MCF 10A (cell line): ENCODE measurements at regions of chr1 and their contacts with region 1.

Region 1: DNA sequence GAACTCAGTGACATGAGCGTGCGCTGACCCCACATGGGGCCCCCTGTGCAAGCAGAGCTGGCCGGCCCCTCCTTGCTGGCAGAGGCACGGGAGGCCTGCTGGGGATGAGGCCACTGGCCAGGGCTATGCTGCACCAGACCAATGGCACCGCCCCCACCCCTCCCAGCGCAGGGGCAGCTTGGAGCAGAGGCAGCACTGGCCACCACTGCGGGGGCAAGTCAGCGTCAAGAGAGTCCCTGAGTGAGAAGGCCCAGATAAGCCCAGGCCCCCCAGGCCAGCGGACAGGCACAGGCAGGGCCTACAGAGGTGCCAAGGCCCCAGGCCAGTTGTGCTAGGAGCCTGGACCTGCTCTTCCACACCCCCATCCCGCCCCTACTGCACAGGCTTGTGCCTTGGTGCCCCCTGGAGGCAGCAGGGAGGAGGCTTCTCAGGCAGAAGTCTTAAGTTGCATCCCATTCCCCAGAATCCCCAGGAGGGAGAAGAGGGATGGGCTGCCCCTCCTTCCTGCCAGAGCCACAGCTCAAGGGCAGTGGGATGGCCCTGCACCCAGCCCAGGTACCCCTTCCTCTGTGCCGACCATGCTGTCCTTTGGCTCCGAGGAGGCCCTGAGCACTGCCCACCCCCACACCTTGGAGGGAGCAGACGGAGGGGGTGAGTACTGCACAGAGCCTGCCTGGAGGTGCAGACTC is 35.8 kb downstream of the EPHX1 start:
- DNase-seq: peak; percentile 95
- H3K4me3 Mint-ChIP-seq: no peak overlapping the region
- H3K27ac Mint-ChIP-seq: no peak overlapping the region
- H3K4me1 Mint-ChIP-seq: no peaks in the 10 kb centered on the region
- H3K27me3 Mint-ChIP-seq: no peaks in the 10 kb centered on the region
- CTCF ChIP-seq: peak; percentile 97

Region 2: DNA sequence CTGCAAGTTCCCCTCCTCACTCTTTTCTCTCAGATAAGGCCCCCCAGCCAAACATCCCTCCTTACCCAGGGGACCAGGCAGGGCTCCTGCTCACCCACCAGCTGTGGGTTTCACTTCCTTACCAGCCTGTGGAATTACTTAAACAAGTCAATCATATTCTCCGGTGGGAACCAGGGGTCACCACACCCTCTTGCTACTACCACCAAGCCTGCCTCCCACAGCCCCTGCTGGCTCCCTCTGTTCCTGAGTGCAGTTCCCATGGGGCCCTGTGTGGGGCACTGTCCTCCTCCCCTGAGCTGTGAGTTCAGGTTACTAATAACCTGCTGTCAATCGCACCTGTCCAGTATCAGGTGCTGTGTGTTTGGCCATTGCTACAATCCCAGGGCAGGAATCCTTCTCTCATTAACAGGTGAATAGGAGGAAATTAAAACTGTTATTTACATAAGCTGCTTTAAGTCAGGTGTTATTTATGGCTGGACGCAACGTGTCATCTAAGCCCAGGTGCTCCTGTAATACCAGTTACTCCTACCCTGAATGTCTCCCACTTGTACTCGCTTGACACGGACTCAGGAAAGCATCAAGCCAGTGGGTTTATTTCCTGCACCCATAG is 364.8 kb before region 1 on chr1:
- CTCF ChIA-PET with region 1: interaction called, 58 read pairs
- POLR2A ChIA-PET with region 1: interaction called, 3 read pairs
- intact Hi-C with region 1: loop called (anchors 1 kb)
- DNase-seq: peak; percentile 85
- H3K4me3 Mint-ChIP-seq: no peak overlapping the region
- H3K27ac Mint-ChIP-seq: no peak overlapping the region
- H3K4me1 Mint-ChIP-seq: peaks cover 7% of the 10 kb centered on the region
- H3K27me3 Mint-ChIP-seq: peaks cover 15% of the 10 kb centered on the region
- CTCF ChIP-seq: peak; percentile 100

Region 3: GRCh38 chr1:225559326-225559725 is 286.4 kb before region 1 on chr1:
- CTCF ChIA-PET with region 1: interaction called, 3 read pairs
- POLR2A ChIA-PET with region 1: no interaction called
- intact Hi-C with region 1: loop called (anchors 5 kb)
- DNase-seq: no peak
- H3K4me3 Mint-ChIP-seq: no peak overlapping the region
- H3K27ac Mint-ChIP-seq: no peak overlapping the region
- H3K4me1 Mint-ChIP-seq: peaks cover 13% of the 10 kb centered on the region
- H3K27me3 Mint-ChIP-seq: no peaks in the 10 kb centered on the region
- CTCF ChIP-seq: no peak

Region 4: DNA sequence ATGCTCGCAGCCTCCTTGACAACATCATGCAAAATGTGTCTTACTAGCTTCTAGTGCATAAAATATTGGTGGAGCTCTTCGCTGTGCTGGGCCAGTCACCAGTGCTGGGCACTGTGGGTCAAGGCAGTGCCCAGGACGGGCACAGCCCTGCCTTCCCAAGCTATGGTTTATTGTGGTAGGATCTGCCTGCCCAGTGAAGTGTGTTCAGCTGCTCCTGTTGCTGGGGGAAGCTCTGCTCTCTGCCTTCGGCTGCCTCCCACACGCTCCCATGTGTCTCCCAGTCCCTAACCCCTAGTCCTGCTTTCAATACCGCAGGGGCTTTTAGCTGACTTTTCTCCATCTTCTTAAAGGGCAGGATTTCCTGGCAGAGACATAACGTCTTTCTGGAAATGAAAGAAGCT is 20.1 kb before region 1 on chr1:
- CTCF ChIA-PET with region 1: interaction called, 20 read pairs
- POLR2A ChIA-PET with region 1: interaction called, 5 read pairs
- intact Hi-C with region 1: no loop called
- DNase-seq: no peak
- H3K4me3 Mint-ChIP-seq: no peak overlapping the region
- H3K27ac Mint-ChIP-seq: peak overlapping the region; percentile 3
- H3K4me1 Mint-ChIP-seq: peaks cover 21% of the 10 kb centered on the region
- H3K27me3 Mint-ChIP-seq: no peaks in the 10 kb centered on the region
- CTCF ChIP-seq: no peak

Region 5: GRCh38 chr1:225857256-225857655 is 11.5 kb after region 1 on chr1:
- CTCF ChIA-PET with region 1: interaction called, 13 read pairs
- POLR2A ChIA-PET with region 1: interaction called, 4 read pairs
- intact Hi-C with region 1: no loop called
- DNase-seq: no peak
- H3K4me3 Mint-ChIP-seq: no peak overlapping the region
- H3K27ac Mint-ChIP-seq: no peak overlapping the region
- H3K4me1 Mint-ChIP-seq: no peaks in the 10 kb centered on the region
- H3K27me3 Mint-ChIP-seq: no peaks in the 10 kb centered on the region
- CTCF ChIP-seq: no peak

Region 6: DNA sequence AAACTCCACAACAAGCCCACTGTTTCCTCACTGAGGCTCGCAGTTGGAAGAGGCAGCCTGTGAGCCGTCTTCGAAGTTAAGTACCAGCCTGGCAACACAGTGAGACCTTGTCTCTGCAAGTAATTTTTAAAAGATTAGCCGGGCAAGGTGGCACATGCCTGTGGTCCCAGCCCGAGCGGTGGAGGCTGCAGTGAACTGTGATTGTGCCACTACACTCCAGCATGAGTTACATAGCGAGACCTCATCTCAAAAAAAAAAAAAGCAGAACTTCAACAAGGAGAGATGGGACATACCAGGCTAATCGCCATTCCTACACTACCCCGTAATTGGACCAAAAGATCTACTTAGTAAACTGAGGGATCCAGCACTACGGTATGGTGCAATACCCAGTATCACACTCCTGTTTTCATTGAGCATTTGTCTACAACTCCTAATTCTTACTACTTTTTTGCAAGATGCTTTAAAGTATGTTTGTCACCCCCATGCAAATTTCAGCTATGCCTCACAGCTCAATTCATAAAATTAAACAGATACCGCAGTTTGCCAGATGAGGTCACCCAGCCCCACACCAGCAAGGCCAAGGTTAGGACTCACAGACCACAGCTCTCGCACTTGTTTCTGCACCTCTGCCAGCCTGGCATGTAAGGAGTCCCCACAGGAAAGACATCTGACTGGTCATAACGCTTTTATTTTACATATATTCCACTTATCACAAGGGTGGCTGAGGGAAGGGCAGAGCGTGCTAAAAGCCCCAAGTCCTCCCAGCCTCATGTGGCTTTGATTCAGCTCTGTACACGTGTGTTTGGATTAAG is 132.4 kb after region 1 on chr1:
- CTCF ChIA-PET with region 1: interaction called, 5 read pairs
- POLR2A ChIA-PET with region 1: no interaction called
- intact Hi-C with region 1: loop called (anchors 5 kb)
- DNase-seq: no peak
- H3K4me3 Mint-ChIP-seq: no peak overlapping the region
- H3K27ac Mint-ChIP-seq: no peak overlapping the region
- H3K4me1 Mint-ChIP-seq: peaks cover 5% of the 10 kb centered on the region
- H3K27me3 Mint-ChIP-seq: no peaks in the 10 kb centered on the region
- CTCF ChIP-seq: no peak